Psoas muscle (tissue), 8 donors: ENCODE measurements at regions of chr1 and their contacts with region 1.

Region 1: GRCh38 chr1:198686069-198686728 is 47.4 kb downstream of the PTPRC start:
- DNase-seq: no peak
- ATAC-seq: no peak
- H3K4me3 ChIP-seq: no peak overlapping the region
- H3K27ac ChIP-seq: no peak overlapping the region
- H3K4me1 ChIP-seq: no peaks in the 10 kb centered on the region
- H3K27me3 ChIP-seq: no peaks in the 10 kb centered on the region
- CTCF ChIP-seq: no peak

Region 2: DNA sequence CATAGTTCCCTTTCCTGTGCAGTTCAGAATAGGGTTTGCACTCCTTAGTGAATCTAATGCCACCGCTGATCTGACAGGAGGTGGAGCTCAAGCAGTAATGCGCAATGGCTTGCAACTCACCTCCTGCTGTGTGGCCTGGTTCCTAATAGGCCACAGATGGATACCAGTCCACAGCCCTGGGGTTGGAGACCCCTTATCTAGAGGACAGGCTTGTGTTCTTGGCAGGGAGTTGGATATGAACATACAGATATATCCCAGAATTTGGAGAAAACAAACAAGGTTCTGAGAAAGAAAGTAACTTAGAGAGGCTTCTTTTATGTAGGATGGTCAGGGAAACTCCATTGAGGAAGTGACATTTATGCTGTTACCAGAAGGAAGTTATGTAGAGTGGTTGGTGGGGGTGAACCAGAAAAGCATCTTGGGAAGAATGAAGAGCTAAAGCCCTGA is 52.5 kb before region 1 on chr1:
- intact Hi-C with region 1: loop called in 1 of 2 experiments (anchors 2 kb)
- DNase-seq: no peak
- ATAC-seq: no peak
- H3K4me3 ChIP-seq: no peak overlapping the region
- H3K27ac ChIP-seq: no peak overlapping the region
- H3K4me1 ChIP-seq: no peaks in the 10 kb centered on the region
- H3K27me3 ChIP-seq: no peaks in the 10 kb centered on the region
- CTCF ChIP-seq: no peak

Region 3: GRCh38 chr1:198649968-198650338 is 36.2 kb before region 1 on chr1:
- intact Hi-C with region 1: no loop called
- DNase-seq: no peak
- ATAC-seq: no peak
- H3K4me3 ChIP-seq: no peak overlapping the region
- H3K27ac ChIP-seq: no peak overlapping the region
- H3K4me1 ChIP-seq: no peaks in the 10 kb centered on the region
- H3K27me3 ChIP-seq: no peaks in the 10 kb centered on the region
- CTCF ChIP-seq: no peak